ENCODE measurements at regions of chr16 and their contacts with region 1.

Region 1: DNA sequence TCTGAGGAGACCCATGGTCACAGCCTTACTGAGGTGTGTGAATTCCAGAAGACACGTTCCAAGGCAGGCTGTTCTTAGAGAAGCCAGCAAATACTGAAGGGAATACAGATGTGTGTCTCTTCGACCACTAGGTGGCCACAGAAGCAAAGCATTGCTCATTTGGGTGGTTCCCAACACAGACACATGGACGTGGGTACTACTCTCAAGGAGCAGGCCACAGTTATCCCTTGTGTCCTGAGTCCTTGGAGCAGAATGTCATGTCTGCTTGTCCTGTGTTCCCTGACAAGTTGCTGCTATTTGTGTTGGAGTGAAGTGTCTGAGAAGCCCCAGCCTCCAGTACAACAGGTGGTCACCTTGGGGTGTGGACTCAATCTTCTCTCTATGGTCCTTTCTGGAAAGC is 30.3 kb downstream of the HMOX2 start:
- DNase-seq: peak; percentile 28 to 88 (median 60)
- ATAC-seq: peak; percentile 34
- H3K4me3 ChIP-seq: no peak overlapping the region
- H3K4me3 Mint-ChIP-seq: peak overlapping the region; percentile 65
- H3K27ac ChIP-seq: peak overlapping the region; percentile 85 to 88
- H3K27ac Mint-ChIP-seq: peak overlapping the region; percentile 98
- H3K4me1 ChIP-seq: peaks cover 58% of the 10 kb centered on the region
- H3K4me1 Mint-ChIP-seq: peaks cover 59% of the 10 kb centered on the region
- H3K27me3 ChIP-seq: no peaks in the 10 kb centered on the region
- H3K27me3 Mint-ChIP-seq: no peaks in the 10 kb centered on the region
- CTCF ChIP-seq: peak; percentile 88

Region 2: DNA sequence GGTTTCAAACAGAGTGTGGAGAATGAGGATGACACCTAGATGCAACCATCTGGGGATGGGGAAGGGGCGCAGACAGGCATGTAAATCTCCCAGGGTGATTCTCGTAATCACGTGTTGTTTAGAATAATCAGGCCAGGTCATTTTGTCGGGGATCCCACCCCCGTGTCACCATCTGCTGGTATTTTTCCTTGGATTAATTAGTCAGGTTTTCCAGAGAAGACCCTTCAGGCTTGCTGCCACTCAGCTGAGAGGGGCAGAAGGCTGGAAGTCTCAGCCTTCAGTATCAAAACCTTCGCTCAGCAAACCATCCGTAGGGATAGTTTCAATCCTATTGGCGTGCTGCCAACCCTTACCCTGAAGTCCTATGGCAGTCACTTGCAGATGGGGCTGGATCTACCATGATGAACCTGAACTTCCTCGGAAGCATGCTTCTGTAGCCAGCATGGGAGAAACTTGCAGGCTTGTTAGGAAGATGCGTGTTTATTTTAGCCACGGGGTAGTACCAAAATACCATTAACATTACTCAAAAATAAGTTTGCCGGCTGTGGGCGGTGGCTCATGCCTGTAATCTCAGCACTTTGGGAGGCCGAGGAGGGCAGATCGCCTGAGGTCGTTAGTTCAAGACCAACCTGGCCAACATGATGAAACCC is 382.7 kb before region 1 on chr16:
- CTCF ChIA-PET with region 1: no interaction called
- POLR2A ChIA-PET with region 1: no interaction called
- intact Hi-C with region 1: no loop called
- DNase-seq: no peak
- ATAC-seq: no peak
- H3K4me3 ChIP-seq: no peak overlapping the region
- H3K4me3 Mint-ChIP-seq: no peak overlapping the region
- H3K27ac ChIP-seq: no peak overlapping the region
- H3K27ac Mint-ChIP-seq: no peak overlapping the region
- H3K4me1 ChIP-seq: no peaks in the 10 kb centered on the region
- H3K4me1 Mint-ChIP-seq: no peaks in the 10 kb centered on the region
- H3K27me3 ChIP-seq: no peaks in the 10 kb centered on the region
- H3K27me3 Mint-ChIP-seq: peaks cover 7% of the 10 kb centered on the region
- CTCF ChIP-seq: no peak

Region 3: DNA sequence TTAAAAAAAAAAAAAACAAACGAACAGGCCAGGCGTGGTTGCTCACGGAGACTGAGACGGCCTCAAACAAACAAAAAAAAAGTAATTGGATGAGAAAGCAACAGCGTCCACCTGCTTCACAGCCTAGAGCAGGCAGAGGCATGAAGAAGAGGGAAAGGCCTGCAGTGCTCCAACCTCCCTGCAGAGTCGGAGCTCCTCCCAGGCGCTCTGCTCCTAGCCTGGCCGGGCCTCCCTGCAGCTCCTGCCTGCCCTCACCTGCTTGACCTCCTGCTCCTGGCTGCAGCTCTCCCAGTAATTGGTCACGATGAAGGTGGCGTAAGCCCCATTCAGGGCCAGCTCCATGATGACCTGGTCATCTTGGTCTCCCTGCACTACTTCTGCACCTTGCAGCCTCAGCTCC is 37.5 kb before region 1 on chr16:
- CTCF ChIA-PET with region 1: interaction called, 73 read pairs
- POLR2A ChIA-PET with region 1: interaction called, 75 read pairs
- intact Hi-C with region 1: no loop called
- DNase-seq: no peak
- ATAC-seq: no peak
- H3K4me3 ChIP-seq: no peak overlapping the region
- H3K4me3 Mint-ChIP-seq: no peak overlapping the region
- H3K27ac ChIP-seq: no peak overlapping the region
- H3K27ac Mint-ChIP-seq: no peak overlapping the region
- H3K4me1 ChIP-seq: peaks cover 21% of the 10 kb centered on the region
- H3K4me1 Mint-ChIP-seq: peaks cover 29% of the 10 kb centered on the region
- H3K27me3 ChIP-seq: no peaks in the 10 kb centered on the region
- H3K27me3 Mint-ChIP-seq: no peaks in the 10 kb centered on the region
- CTCF ChIP-seq: no peak

Region 4: DNA sequence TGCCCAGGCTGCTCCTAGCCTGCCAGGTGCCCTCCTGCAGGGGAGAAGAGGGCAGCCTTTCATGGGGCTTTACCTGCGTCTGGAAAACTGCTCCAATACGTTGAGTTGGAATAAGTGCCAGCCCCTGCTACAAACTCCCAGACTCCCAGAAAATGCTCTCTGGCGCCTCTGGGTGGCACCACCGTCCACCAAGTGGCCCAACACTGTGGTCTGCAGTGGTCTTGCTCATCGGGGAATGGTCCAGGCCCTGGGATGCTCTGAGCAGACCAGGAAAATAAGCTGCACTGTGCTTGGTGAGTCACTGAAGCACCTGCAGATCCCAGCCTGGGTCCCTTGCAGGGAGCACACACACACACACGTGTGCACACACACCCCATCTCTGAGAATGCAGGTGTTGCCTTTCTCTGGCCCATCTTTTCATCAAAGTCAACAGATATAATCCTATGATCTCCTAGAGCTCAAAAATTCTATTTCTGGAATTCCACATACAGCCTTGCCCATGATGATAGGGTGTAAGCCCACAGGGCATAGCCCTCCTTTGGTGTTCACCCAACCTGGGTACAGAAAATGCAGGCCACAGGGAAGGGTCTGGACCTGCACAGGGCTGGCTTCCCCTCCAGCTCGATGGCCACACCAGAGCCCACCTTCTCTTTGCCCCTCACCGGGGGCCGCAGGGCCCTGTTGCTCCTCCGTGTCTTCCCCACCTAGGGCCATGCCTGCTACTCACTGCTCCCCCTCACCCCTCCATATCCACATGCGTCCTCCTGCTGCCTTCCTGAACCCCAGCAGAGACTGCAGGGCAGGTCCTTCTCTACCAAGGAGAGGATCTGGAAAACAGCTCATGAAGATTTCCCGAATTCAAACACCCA is 11.6 kb after region 1 on chr16:
- CTCF ChIA-PET with region 1: interaction called, 11 read pairs
- POLR2A ChIA-PET with region 1: interaction called, 8 read pairs
- intact Hi-C with region 1: no loop called
- DNase-seq: no peak
- ATAC-seq: no peak
- H3K4me3 ChIP-seq: no peak overlapping the region
- H3K4me3 Mint-ChIP-seq: no peak overlapping the region
- H3K27ac ChIP-seq: peak overlapping the region in 1 of 2 experiments; percentile 18
- H3K27ac Mint-ChIP-seq: peak overlapping the region; percentile 80
- H3K4me1 ChIP-seq: peaks cover 34% of the 10 kb centered on the region
- H3K4me1 Mint-ChIP-seq: peaks cover 40% of the 10 kb centered on the region
- H3K27me3 ChIP-seq: no peaks in the 10 kb centered on the region
- H3K27me3 Mint-ChIP-seq: no peaks in the 10 kb centered on the region
- CTCF ChIP-seq: no peak

Region 5: GRCh38 chr16:4538350-4539235 is 32.1 kb after region 1 on chr16 and contains the start of gene CDIP1:
- CTCF ChIA-PET with region 1: interaction called, 115 read pairs
- POLR2A ChIA-PET with region 1: interaction called, 13 read pairs
- intact Hi-C with region 1: loop called in 1 of 2 experiments (anchors 1 kb)
- DNase-seq: peak; percentile 88 to 98 (median 94)
- ATAC-seq: peak; percentile 86
- H3K4me3 ChIP-seq: peak within 1 kb of the TSS; percentile 71
- H3K4me3 Mint-ChIP-seq: peak within 1 kb of the TSS; percentile 80
- H3K27ac ChIP-seq: peak within 1 kb of the TSS; percentile 86 to 90
- H3K27ac Mint-ChIP-seq: peak within 1 kb of the TSS; percentile 92
- H3K4me1 ChIP-seq: peaks cover 45% of the 10 kb centered on the region
- H3K4me1 Mint-ChIP-seq: peaks cover 39% of the 10 kb centered on the region
- H3K27me3 ChIP-seq: no peaks in the 10 kb centered on the region
- H3K27me3 Mint-ChIP-seq: no peaks in the 10 kb centered on the region
- CTCF ChIP-seq: no peak
- total RNA-seq, gene CDIP1: 21.7 to 25.0 TPM

Region 6: DNA sequence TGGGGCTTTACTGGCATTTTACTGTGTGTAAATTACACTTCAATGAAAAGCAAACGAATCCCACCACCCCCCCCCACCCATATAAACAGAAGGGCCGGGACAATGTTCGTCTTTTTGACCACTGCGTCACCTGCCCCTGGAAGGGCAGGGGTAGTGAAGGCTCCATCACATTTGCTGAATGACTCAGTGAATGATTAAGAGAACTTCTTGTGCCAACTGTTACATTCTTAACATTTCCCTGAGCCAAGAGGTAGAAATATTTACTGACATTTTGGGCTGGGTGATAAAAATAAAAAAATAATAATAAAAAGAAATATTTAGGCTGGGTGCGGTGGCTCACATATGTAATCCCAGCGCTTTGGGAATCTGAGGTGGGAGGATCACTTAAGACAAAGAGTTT is 73.8 kb after region 1 on chr16:
- CTCF ChIA-PET with region 1: interaction called, 13 read pairs
- POLR2A ChIA-PET with region 1: no interaction called
- intact Hi-C with region 1: loop called (anchors 1 kb)
- DNase-seq: no peak
- ATAC-seq: no peak
- H3K4me3 ChIP-seq: no peak overlapping the region
- H3K4me3 Mint-ChIP-seq: no peak overlapping the region
- H3K27ac ChIP-seq: no peak overlapping the region
- H3K27ac Mint-ChIP-seq: no peak overlapping the region
- H3K4me1 ChIP-seq: peaks cover 1% of the 10 kb centered on the region
- H3K4me1 Mint-ChIP-seq: no peaks in the 10 kb centered on the region
- H3K27me3 ChIP-seq: no peaks in the 10 kb centered on the region
- H3K27me3 Mint-ChIP-seq: no peaks in the 10 kb centered on the region
- CTCF ChIP-seq: no peak

Region 7: DNA sequence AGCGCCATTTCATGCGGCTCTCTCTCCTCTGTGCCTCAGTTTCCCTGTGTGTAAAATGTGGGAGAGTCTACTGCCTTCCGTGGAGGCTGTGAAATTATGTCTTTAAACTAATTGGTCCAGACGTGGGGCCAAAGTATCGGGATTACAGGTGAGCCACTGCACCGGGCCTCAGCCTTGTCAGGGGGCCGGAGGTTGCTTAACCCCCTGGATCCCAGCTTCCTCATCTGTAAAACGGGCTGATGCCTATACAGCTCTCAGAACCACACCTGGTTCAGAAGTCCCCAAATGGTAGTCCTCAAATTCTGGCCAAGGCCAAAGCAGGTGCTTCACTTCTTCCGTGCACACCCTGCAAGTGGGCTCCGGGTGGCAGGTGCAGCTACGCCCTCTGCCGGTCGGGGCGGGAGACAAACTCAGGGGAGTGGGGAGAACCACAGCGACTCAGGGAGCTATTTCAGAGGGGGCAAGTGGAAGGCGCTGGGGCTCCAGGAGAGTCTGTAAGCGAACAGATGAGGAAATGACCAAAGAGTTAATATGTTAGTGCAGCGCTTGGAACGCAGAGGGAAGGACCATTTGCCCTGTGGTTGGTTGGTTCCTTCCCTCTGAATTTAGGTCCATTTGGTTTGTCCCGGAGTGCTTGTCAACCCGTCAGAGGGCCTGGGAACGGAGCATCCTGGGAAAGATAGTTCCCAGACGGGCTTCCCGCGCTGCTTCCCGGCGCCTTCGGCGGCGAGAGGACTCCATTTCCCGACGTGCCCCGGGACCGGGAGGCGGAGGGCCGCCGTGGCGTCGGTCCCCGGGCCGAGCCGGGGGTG is 117.8 kb after region 1 on chr16 and contains the start of gene MGRN1:
- CTCF ChIA-PET with region 1: interaction called, 6 read pairs
- POLR2A ChIA-PET with region 1: no interaction called
- intact Hi-C with region 1: loop called (anchors 1 kb)
- DNase-seq: peak; percentile 84 to 96 (median 92)
- ATAC-seq: peak; percentile 94
- H3K4me3 ChIP-seq: peak within 1 kb of the TSS; percentile 64 to 86
- H3K4me3 Mint-ChIP-seq: peak within 1 kb of the TSS; percentile 93
- H3K27ac ChIP-seq: peak within 1 kb of the TSS; percentile 92 to 98
- H3K27ac Mint-ChIP-seq: peak within 1 kb of the TSS; percentile 99
- H3K4me1 ChIP-seq: peaks cover 27% of the 10 kb centered on the region
- H3K4me1 Mint-ChIP-seq: peaks cover 30% of the 10 kb centered on the region
- H3K27me3 ChIP-seq: no peaks in the 10 kb centered on the region
- H3K27me3 Mint-ChIP-seq: no peaks in the 10 kb centered on the region
- CTCF ChIP-seq: peak; percentile 95
- total RNA-seq, gene MGRN1: 46.5 to 48.6 TPM

Measured in CD8-positive, alpha-beta T cell (primary cell).